ENCODE measurements at regions of chr2 and their contacts with region 1.

Region 1: GRCh38 chr2:42575458-42576064 is 7.1 kb downstream of the MTA3 start:
- DNase-seq: peak; percentile 10
- H3K4me3 Mint-ChIP-seq: no peak overlapping the region
- H3K27ac Mint-ChIP-seq: peak overlapping the region; percentile 81
- H3K4me1 Mint-ChIP-seq: peaks cover 21% of the 10 kb centered on the region
- H3K27me3 Mint-ChIP-seq: no peaks in the 10 kb centered on the region

Region 2: GRCh38 chr2:42513257-42513918 is 62.2 kb before region 1 on chr2:
- CTCF ChIA-PET with region 1: no interaction called
- POLR2A ChIA-PET with region 1: no interaction called
- DNase-seq: peak; percentile 30
- H3K4me3 Mint-ChIP-seq: no peak overlapping the region
- H3K27ac Mint-ChIP-seq: no peak overlapping the region
- H3K4me1 Mint-ChIP-seq: peaks cover 10% of the 10 kb centered on the region
- H3K27me3 Mint-ChIP-seq: no peaks in the 10 kb centered on the region

Region 3: GRCh38 chr2:42598656-42599055 is 23.1 kb after region 1 on chr2:
- CTCF ChIA-PET with region 1: no interaction called
- POLR2A ChIA-PET with region 1: interaction called, 10 read pairs
- DNase-seq: no peak
- H3K4me3 Mint-ChIP-seq: no peak overlapping the region
- H3K27ac Mint-ChIP-seq: no peak overlapping the region
- H3K4me1 Mint-ChIP-seq: no peaks in the 10 kb centered on the region
- H3K27me3 Mint-ChIP-seq: no peaks in the 10 kb centered on the region